ENCODE measurements at regions of chr3 and their contacts with region 1.

Region 1: DNA sequence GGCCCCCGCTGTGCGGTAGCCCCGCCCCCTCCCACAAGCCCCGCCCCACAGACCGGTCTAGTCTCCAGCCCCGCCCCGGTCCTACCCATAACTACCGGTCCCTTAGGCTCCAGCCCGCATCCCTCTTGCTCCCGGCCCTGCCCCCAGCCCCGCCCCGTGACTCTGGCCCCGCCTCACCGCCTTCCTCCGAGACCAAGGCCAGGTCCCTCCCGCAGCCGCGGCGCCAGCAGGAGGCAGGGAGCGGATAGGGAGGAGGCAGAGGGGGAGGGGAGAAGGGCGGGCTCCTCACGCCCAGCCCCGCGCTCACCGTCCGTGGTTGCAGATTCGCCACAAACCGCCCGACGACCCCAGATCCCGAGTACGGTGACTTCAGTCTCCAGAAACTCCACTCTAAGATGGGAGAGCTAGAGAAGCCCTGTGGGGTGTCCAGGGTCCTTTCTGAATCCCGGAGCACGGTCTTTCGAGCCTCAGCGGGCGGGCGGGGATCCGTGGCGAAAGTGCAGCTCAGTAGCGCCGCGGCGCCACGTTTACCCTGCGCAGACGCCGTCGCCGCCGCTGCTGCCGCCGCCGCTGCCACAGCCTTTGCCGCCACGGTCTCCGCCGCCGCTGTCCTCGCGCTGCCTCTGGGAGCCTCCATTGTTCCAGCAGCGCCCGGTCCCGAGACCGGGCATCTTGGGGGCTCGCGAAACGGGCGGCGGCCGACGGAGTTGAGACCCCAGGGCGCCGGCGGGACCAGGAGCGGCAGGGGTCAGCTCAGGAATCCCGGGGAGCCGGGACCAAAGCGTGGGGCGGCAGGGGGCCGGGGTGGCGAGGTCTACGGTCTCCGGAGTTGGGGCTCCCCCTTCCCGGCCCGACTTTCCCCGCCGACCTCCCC is at the start of gene BRPF1:
- DNase-seq: peak; percentile 99
- H3K4me3 ChIP-seq: peak within 1 kb of the TSS; percentile 85 to 95 (median 87)
- H3K27ac ChIP-seq: peak within 1 kb of the TSS; percentile 99
- H3K4me1 ChIP-seq: peaks cover 13% of the 10 kb centered on the region
- H3K27me3 ChIP-seq: no peaks in the 10 kb centered on the region
- CTCF ChIP-seq: peak in 1 of 2 donors; percentile 36
- total RNA-seq, gene BRPF1: 16.5 to 21.2 TPM

Region 2: DNA sequence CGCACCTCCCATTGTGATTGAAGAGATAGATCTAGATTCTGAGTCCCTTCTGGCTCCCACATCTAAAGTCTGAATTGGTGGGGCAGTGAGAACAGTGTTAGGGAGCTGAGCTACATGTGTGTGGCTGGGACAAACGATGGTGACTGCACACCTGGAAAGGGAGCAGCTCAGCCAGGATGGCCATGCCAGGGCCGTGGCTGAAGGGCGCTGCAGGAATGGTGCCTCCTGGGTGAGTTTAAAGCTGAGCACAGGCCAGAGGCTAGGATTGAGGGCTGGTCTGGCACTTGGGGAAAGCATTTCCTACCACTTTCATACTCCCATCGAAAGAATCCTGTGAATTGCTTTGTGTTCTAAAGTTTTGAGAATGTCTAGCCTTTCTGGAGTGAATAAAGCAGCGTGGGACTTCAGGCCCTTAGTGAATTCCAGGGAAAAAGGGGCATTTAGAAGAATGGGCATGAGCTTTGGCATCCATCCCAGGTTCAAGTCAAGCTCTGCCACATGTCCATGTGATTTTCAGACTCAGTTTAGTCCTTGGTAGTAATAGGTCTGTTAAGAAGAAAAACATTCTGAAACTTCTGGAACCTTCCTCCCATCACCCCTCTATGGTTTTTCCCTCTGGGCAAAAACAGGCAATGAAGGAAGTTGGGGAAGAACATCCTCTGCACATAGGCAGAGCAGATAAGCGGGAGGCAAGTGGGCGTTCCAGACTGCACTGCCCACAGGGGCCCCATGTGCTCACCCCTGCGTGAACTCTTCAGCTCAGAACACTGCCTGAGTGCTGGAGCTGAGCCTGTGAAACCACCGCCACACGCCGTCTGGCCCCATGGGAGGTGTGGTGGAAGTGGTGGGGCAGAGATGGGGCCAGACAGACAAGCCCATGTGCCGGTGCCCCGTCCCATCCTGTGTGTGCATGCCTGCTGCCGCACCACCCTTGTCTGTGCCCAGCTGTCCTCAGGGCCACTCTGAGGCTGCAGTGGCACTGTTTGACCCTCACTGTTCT is 40.7 kb before region 1 on chr3:
- CTCF ChIA-PET with region 1: no interaction called
- dilution Hi-C with region 1: loop called (anchors 5 kb)
- in situ Hi-C with region 1: no loop called
- intact Hi-C with region 1: no loop called
- DNase-seq: no peak
- H3K4me3 ChIP-seq: no peak overlapping the region
- H3K27ac ChIP-seq: no peak overlapping the region
- H3K4me1 ChIP-seq: no peaks in the 10 kb centered on the region
- H3K27me3 ChIP-seq: no peaks in the 10 kb centered on the region
- CTCF ChIP-seq: no peak

Region 3: DNA sequence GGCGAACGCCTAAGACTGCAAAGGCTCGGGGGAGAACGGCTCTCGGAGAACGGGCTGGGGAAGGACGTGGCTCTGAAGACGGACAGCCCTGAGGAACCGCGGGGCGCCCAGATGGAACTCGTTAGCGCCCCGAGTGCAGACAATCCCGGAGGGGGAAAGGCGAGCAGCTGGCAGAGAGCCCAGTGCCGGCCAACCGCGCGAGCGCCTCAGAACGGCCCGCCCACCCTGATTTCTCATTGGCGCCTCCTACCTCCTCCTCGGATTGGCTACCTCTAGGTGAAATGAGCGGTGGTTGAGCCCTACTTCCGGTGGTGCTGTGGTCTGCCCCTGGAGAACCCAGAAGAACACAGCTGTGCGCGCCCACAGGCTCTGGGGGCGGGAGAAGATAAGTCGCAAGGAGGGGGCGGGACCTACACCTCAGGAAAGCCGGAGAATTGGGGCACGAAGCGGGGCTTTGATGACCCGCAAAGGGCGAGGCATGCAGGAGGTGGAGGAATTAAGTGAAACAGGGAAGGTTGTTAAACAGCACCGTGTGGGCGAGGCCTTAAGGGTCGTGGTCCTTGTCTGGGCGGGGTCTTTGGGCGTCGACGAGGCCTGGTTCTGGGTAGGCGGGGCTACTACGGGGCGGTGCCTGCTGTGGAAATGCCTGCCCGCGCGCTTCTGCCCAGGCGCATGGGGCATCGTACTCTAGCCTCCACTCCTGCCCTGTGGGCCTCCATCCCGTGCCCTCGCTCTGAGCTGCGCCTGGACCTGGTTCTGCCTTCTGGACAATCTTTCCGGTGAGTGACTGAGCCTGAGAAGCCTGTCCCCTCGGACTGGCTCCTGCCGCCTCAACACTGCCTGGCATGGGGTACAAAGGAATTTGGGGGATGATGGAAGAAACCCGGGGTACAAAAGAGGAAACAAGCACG is 18.5 kb after region 1 on chr3 and contains the start of gene OGG1:
- CTCF ChIA-PET with region 1: no interaction called
- dilution Hi-C with region 1: no loop called
- in situ Hi-C with region 1: no loop called
- intact Hi-C with region 1: loop called (anchors 2 kb)
- DNase-seq: peak; percentile 98
- H3K4me3 ChIP-seq: peak within 1 kb of the TSS; percentile 66 to 77 (median 69)
- H3K27ac ChIP-seq: peak within 1 kb of the TSS; percentile 45
- H3K4me1 ChIP-seq: peaks cover 20% of the 10 kb centered on the region
- H3K27me3 ChIP-seq: no peaks in the 10 kb centered on the region
- CTCF ChIP-seq: no peak
- total RNA-seq, gene OGG1: 17.5 to 19.2 TPM

Region 4: GRCh38 chr3:9792405-9793160 is 61.1 kb after region 1 on chr3 and contains the starts of genes ARPC4 and TADA3:
- CTCF ChIA-PET with region 1: no interaction called
- dilution Hi-C with region 1: no loop called
- in situ Hi-C with region 1: no loop called
- intact Hi-C with region 1: loop called (anchors 1 kb)
- DNase-seq: peak; percentile 93
- H3K4me3 ChIP-seq: peak within 1 kb of the TSS; percentile 73 to 80 (median 76)
- H3K27ac ChIP-seq: peak within 1 kb of the TSS; percentile 95
- H3K4me1 ChIP-seq: peaks cover 16% of the 10 kb centered on the region
- H3K27me3 ChIP-seq: no peaks in the 10 kb centered on the region
- CTCF ChIP-seq: no peak
- total RNA-seq, gene ARPC4: 135 to 202 TPM
- total RNA-seq, gene TADA3: 57.5 to 75.5 TPM

Measured in mammary epithelial cell (primary cell).